ENCODE measurements at regions of chr5 and their contacts with region 1.

Region 1: GRCh38 chr5:69189162-69190086 is at the start of gene CENPH:
- DNase-seq: peak; percentile 95
- H3K4me3 Mint-ChIP-seq: peak within 1 kb of the TSS; percentile 92
- H3K27ac Mint-ChIP-seq: peak within 1 kb of the TSS; percentile 93
- H3K4me1 Mint-ChIP-seq: peaks cover 17% of the 10 kb centered on the region
- H3K27me3 Mint-ChIP-seq: no peaks in the 10 kb centered on the region
- total RNA-seq, gene CENPH: 41.8 to 44.1 TPM

Region 2: DNA sequence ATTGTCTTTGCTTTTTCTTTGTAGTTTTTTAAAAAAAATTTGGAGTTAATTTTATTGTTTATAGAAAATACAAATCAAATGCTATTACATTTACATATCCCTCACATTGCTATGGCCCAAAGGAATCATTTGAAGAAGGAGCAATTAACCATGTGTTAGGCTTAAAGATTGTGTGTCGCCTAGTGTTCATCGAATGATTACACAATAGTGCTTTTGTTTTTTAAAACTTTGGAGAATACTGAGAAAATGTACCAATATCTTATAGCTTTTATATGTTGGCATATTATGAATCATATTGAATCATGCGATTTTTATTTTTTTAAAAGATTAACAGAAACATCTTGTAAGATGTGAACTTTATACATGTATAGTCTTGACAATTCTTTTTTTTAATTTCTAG is 73.9 kb before region 1 on chr5:
- CTCF ChIA-PET with region 1: no interaction called
- POLR2A ChIA-PET with region 1: no interaction called
- DNase-seq: no peak
- H3K4me3 Mint-ChIP-seq: no peak overlapping the region
- H3K27ac Mint-ChIP-seq: no peak overlapping the region
- H3K4me1 Mint-ChIP-seq: no peaks in the 10 kb centered on the region
- H3K27me3 Mint-ChIP-seq: no peaks in the 10 kb centered on the region

Region 3: GRCh38 chr5:69148586-69149360 is 40.7 kb before region 1 on chr5:
- CTCF ChIA-PET with region 1: no interaction called
- POLR2A ChIA-PET with region 1: no interaction called
- DNase-seq: no peak
- H3K4me3 Mint-ChIP-seq: no peak overlapping the region
- H3K27ac Mint-ChIP-seq: no peak overlapping the region
- H3K4me1 Mint-ChIP-seq: no peaks in the 10 kb centered on the region
- H3K27me3 Mint-ChIP-seq: no peaks in the 10 kb centered on the region

Region 4: DNA sequence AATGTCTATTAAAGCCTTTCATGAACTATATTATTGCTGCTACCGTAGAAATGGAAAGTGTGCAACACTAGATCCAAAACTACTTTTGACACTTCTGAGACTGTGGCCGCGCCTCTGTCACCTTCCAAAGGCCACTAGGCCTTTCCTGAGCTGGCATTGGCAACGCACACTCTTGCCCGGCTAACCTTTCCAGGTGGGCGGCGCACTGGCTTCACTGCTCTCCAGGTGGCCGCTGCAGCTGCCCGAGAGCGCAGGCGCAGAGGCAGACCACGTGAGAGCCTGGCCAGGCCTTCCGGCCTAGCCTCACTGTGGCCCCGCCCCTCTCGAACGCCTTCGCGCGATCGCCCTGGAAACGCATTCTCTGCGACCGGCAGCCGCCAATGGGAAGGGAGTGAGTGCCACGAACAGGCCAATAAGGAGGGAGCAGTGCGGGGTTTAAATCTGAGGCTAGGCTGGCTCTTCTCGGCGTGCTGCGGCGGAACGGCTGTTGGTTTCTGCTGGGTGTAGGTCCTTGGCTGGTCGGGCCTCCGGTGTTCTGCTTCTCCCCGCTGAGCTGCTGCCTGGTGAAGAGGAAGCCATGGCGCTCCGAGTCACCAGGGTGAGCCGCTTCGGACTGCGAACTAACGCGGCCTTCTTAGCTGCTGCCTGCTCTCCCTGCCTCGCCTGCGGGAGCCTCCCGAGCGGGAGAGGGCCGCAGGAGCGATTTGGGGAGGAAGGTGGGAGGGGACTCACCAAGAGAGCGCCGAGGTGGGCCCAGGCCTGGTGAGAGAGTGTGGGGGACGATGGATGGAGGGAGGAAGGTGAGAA is 22.5 kb before region 1 on chr5 and contains the start of gene CCNB1:
- CTCF ChIA-PET with region 1: interaction called, 9 read pairs
- POLR2A ChIA-PET with region 1: interaction called, 41 read pairs
- DNase-seq: peak; percentile 99
- H3K4me3 Mint-ChIP-seq: peak within 1 kb of the TSS; percentile 94
- H3K27ac Mint-ChIP-seq: peak within 1 kb of the TSS; percentile 85
- H3K4me1 Mint-ChIP-seq: peaks cover 50% of the 10 kb centered on the region
- H3K27me3 Mint-ChIP-seq: no peaks in the 10 kb centered on the region
- total RNA-seq, gene CCNB1: 162 to 175 TPM

Region 5: GRCh38 chr5:69212022-69212421 is 22.6 kb after region 1 on chr5:
- CTCF ChIA-PET with region 1: interaction called, 3 read pairs
- POLR2A ChIA-PET with region 1: interaction called, 23 read pairs
- DNase-seq: no peak
- H3K4me3 Mint-ChIP-seq: peak overlapping the region; percentile 31
- H3K27ac Mint-ChIP-seq: peak overlapping the region; percentile 64
- H3K4me1 Mint-ChIP-seq: peaks cover 17% of the 10 kb centered on the region
- H3K27me3 Mint-ChIP-seq: no peaks in the 10 kb centered on the region

Region 6: GRCh38 chr5:69217548-69218526 is 28.4 kb after region 1 on chr5:
- CTCF ChIA-PET with region 1: interaction called, 3 read pairs
- POLR2A ChIA-PET with region 1: interaction called, 23 read pairs
- DNase-seq: peak; percentile 94
- H3K4me3 Mint-ChIP-seq: peak overlapping the region; percentile 93
- H3K27ac Mint-ChIP-seq: peak overlapping the region; percentile 90
- H3K4me1 Mint-ChIP-seq: peaks cover 24% of the 10 kb centered on the region
- H3K27me3 Mint-ChIP-seq: no peaks in the 10 kb centered on the region

Region 7: GRCh38 chr5:69234457-69235268 is 45.2 kb after region 1 on chr5 and contains the start of gene CDK7:
- CTCF ChIA-PET with region 1: interaction called, 4 read pairs
- POLR2A ChIA-PET with region 1: interaction called, 28 read pairs
- DNase-seq: peak; percentile 95
- H3K4me3 Mint-ChIP-seq: peak within 1 kb of the TSS; percentile 98
- H3K27ac Mint-ChIP-seq: peak within 1 kb of the TSS; percentile 77
- H3K4me1 Mint-ChIP-seq: peaks cover 39% of the 10 kb centered on the region
- H3K27me3 Mint-ChIP-seq: no peaks in the 10 kb centered on the region
- total RNA-seq, gene CDK7: 26.0 to 30.5 TPM

Region 8: DNA sequence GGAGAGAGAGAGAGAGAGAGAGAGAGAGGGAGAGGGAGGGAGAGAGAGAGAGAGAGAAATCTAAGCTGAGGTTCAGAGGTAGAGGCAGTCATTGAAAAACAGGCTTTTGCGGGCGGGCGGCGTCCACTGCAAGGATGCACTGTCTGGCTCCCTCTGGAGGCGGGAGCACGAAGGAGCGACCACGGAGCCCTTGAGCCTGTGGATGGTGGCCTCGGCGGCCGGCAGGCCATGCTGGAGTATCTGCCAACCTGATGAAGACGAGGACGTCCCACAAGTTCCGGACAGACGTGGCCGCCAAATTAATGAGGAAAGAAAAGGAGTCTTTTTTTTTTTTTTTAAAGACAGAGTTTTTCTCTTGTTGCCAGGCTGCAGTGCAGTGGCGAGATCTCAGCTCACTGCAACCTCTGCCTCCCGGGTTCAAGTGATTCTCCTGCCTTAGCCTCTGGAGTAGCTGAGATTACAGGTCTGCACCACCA is 145.4 kb after region 1 on chr5:
- CTCF ChIA-PET with region 1: interaction called, 13 read pairs
- POLR2A ChIA-PET with region 1: interaction called, 5 read pairs
- DNase-seq: peak; percentile 82
- H3K4me3 Mint-ChIP-seq: peak overlapping the region; percentile 11
- H3K27ac Mint-ChIP-seq: no peak overlapping the region
- H3K4me1 Mint-ChIP-seq: peaks cover 20% of the 10 kb centered on the region
- H3K27me3 Mint-ChIP-seq: no peaks in the 10 kb centered on the region

Region 9: DNA sequence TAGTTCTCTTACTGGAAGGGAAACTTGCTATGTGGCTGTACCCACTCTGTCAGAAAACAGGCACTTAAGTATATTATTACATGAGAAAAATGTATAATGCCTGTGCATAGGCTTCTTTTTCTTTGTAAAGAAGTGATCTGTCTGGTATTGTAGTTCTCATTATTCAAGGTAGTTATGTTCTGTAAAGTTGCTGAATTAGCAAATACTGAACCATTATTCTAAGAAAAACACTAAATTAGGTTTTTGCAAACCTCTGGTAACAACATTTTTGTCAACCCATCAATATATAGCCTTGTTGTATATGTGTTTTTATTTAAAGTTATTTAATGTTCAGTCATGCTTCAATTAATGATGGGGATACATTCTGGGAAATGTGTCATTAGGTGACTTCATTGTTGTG is 189.0 kb after region 1 on chr5:
- CTCF ChIA-PET with region 1: no interaction called
- POLR2A ChIA-PET with region 1: no interaction called
- DNase-seq: no peak
- H3K4me3 Mint-ChIP-seq: no peak overlapping the region
- H3K27ac Mint-ChIP-seq: no peak overlapping the region
- H3K4me1 Mint-ChIP-seq: peaks cover 1% of the 10 kb centered on the region
- H3K27me3 Mint-ChIP-seq: no peaks in the 10 kb centered on the region